T-cell (primary cell): ENCODE measurements at regions of chr4 and their contacts with region 1.

Region 1: DNA sequence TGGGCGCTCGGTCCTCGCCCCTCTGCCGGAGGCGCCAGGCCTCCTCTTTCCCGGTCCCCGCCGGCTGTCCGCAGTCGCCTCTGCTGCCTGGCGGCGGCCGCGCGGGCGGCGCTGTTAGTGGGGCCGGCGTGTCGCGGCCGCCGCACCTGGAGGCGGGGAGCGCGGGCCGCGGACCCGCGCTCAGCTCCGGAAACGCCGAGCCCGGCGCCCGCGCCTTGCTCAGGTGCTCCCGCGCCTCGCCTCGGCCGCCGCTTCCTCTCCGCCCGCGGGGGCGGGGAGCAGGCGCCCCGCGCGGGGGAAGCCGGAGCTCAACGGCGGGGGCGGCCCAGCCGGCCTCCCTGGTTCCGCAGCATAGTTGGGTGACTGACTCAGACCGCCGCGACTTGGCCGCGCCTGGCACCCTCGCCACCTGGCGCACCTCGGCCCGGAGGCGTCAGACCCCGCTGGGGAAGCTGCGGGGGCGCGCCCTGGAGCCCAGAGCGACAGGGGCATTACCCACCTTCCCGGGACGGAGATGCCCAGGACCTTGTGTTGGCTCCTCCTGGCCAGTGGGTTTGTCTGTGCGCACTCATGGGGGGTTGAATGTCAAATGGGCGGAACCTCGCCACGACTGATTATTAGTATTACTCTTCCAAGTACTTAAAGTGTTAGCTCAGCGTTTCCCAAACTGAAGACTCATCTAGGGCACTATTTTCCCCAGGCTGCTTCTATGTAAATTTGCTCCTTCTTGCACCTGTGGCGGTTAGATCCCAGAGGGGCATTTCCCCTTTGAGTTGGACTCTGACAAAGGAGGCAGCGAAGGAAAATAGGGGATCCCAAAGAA is at the start of gene ARAP2:
- DNase-seq: peak; percentile 49 to 86 (median 68)
- ATAC-seq: peak; percentile 79 to 85 (median 84)
- H3K4me3 ChIP-seq: peak within 1 kb of the TSS; percentile 96 to 97
- H3K4me3 Mint-ChIP-seq: peak within 1 kb of the TSS; percentile 90 to 96 (median 90)
- H3K27ac ChIP-seq: peak within 1 kb of the TSS; percentile 97
- H3K27ac Mint-ChIP-seq: peak within 1 kb of the TSS; percentile 94 to 96
- H3K4me1 ChIP-seq: peaks cover 13 to 21% of the 10 kb centered on the region in 2 experiments
- H3K4me1 Mint-ChIP-seq: peaks cover 37 to 58% (median 49%) of the 10 kb centered on the region in 3 donors
- H3K27me3 ChIP-seq: no peaks in the 10 kb centered on the region
- H3K27me3 Mint-ChIP-seq: no peaks in the 10 kb centered on the region
- total RNA-seq, gene ARAP2: 41.2 to 94.3 (median 61.0) TPM

Region 2: GRCh38 chr4:36255577-36255976 is 11.1 kb after region 1 on chr4:
- CTCF ChIA-PET with region 1: interaction called, 3 to 12 read pairs
- POLR2A ChIA-PET with region 1: interaction called, 6 to 15 read pairs
- DNase-seq: peak; percentile 24 to 90 (median 68)
- ATAC-seq: peak; percentile 96 to 99 (median 98)
- H3K4me3 ChIP-seq: no peak overlapping the region
- H3K4me3 Mint-ChIP-seq: peak overlapping the region; percentile 61 to 65 (median 64)
- H3K27ac ChIP-seq: peak overlapping the region; percentile 75
- H3K27ac Mint-ChIP-seq: peak overlapping the region; percentile 88 to 96
- H3K4me1 ChIP-seq: peaks cover 19 to 30% of the 10 kb centered on the region in 2 experiments
- H3K4me1 Mint-ChIP-seq: peaks cover 38 to 50% (median 42%) of the 10 kb centered on the region in 3 donors
- H3K27me3 ChIP-seq: no peaks in the 10 kb centered on the region
- H3K27me3 Mint-ChIP-seq: no peaks in the 10 kb centered on the region

Region 3: DNA sequence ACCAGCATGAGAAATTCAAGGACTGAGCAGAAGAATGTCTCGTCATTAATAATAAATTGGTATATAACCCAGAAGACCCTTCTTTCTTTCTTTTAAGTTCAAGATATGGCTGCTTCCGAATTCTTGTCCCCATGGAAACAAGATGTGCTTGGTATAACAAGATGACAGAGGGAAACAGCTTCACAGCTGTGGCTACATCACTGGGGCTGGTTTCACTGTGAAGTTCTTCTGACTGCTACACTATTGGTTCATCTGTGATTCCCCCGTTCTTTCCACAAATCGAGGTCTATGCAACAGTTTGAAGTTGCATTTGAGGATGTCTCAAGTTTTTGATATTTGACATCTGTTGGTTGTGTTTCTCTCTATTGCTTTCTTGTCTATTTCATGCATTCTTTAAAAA is 24.6 kb after region 1 on chr4:
- CTCF ChIA-PET with region 1: interaction called, 3 to 6 read pairs
- POLR2A ChIA-PET with region 1: interaction called, 3 to 15 read pairs
- DNase-seq: peak in 31 of 35 experiments; percentile 9 to 86 (median 51)
- ATAC-seq: peak; percentile 52 to 97 (median 78)
- H3K4me3 ChIP-seq: no peak overlapping the region
- H3K4me3 Mint-ChIP-seq: peak overlapping the region in 1 of 3 donors; percentile 19
- H3K27ac ChIP-seq: peak overlapping the region; percentile 59
- H3K27ac Mint-ChIP-seq: peak overlapping the region; percentile 75 to 78
- H3K4me1 ChIP-seq: peaks cover 8 to 21% of the 10 kb centered on the region in 2 experiments
- H3K4me1 Mint-ChIP-seq: peaks cover 37 to 43% (median 43%) of the 10 kb centered on the region in 3 donors
- H3K27me3 ChIP-seq: no peaks in the 10 kb centered on the region
- H3K27me3 Mint-ChIP-seq: no peaks in the 10 kb centered on the region

Region 4: DNA sequence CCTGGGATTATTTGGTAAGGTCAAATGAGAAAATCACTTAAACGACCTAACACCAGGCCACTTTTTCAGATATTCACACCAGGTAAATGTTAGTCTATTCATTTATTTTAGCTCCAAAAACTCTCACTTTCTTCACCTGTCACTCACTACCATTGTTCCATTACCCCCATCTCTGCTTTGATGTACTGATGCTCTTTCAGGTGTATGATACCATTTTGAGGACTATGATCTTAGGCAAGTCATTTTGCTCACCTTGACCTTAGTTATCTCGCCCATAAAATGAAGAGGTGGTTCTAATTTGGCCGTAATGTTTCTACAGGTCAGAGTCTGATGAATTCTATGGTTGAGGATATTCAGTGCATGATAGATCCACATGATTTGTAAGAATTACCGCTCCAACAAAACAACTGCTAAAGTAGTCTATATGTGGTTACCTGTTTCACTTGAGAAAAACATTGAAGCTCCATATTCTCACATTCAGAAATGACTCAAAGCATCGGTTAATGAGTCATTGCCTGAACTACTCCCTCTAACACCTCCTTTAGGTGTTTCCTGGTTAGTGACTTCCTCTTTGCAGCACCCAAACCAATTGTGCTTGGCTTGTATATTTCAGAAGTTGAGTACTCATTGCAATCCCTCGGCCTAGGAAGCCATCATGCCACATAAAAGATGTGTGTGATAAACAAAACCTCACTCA is 41.5 kb after region 1 on chr4:
- CTCF ChIA-PET with region 1: interaction called in 1 of 2 experiments, 9 read pairs
- POLR2A ChIA-PET with region 1: interaction called, 3 to 10 read pairs
- DNase-seq: peak in 34 of 35 experiments; percentile 10 to 85 (median 42)
- ATAC-seq: peak; percentile 94 to 97 (median 96)
- H3K4me3 ChIP-seq: no peak overlapping the region
- H3K4me3 Mint-ChIP-seq: peak overlapping the region; percentile 28 to 58 (median 43)
- H3K27ac ChIP-seq: peak overlapping the region; percentile 87
- H3K27ac Mint-ChIP-seq: peak overlapping the region; percentile 94 to 96
- H3K4me1 ChIP-seq: peaks cover 2 to 4% of the 10 kb centered on the region in 2 experiments
- H3K4me1 Mint-ChIP-seq: peaks cover 12 to 58% (median 50%) of the 10 kb centered on the region in 3 donors
- H3K27me3 ChIP-seq: no peaks in the 10 kb centered on the region
- H3K27me3 Mint-ChIP-seq: no peaks in the 10 kb centered on the region

Region 5: DNA sequence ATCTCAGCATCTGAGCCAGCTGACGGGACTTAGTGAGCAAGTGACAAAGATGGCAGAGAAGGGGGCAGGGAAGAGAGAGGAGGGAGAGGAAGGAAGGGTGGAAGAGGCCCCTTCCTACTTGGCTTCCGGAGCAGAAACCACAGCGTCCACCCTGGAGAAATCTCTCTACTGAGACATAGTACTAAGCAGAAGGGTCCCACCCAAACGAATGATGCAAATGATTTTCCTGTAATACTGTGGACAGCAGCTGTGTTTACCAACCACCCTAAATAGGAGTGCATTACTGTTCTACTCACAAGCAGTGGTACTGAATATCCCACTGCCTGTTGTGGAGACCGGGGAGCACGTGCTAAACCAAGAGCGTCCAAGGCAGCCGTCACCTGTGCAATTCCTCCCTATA is 66.3 kb after region 1 on chr4:
- CTCF ChIA-PET with region 1: interaction called in 1 of 2 experiments, 11 read pairs
- POLR2A ChIA-PET with region 1: no interaction called
- DNase-seq: peak in 3 of 35 experiments; percentile 8 to 29 (median 23)
- ATAC-seq: peak in 3 of 4 experiments; percentile 24 to 70 (median 32)
- H3K4me3 ChIP-seq: no peak overlapping the region
- H3K4me3 Mint-ChIP-seq: peak overlapping the region in 1 of 3 donors; percentile 1
- H3K27ac ChIP-seq: no peak overlapping the region
- H3K27ac Mint-ChIP-seq: no peak overlapping the region
- H3K4me1 ChIP-seq: peaks cover 8 to 13% of the 10 kb centered on the region in 2 experiments
- H3K4me1 Mint-ChIP-seq: peaks cover 13 to 29% (median 27%) of the 10 kb centered on the region in 3 donors
- H3K27me3 ChIP-seq: no peaks in the 10 kb centered on the region
- H3K27me3 Mint-ChIP-seq: no peaks in the 10 kb centered on the region

Region 6: GRCh38 chr4:36502350-36502749 is 257.9 kb after region 1 on chr4:
- CTCF ChIA-PET with region 1: no interaction called
- POLR2A ChIA-PET with region 1: no interaction called
- DNase-seq: no peak
- ATAC-seq: no peak
- H3K4me3 ChIP-seq: no peak overlapping the region
- H3K4me3 Mint-ChIP-seq: no peak overlapping the region
- H3K27ac ChIP-seq: no peak overlapping the region
- H3K27ac Mint-ChIP-seq: no peak overlapping the region
- H3K4me1 ChIP-seq: no peaks in the 10 kb centered on the region
- H3K4me1 Mint-ChIP-seq: no peaks in the 10 kb centered on the region
- H3K27me3 ChIP-seq: no peaks in the 10 kb centered on the region
- H3K27me3 Mint-ChIP-seq: peaks cover 9 to 13% of the 10 kb centered on the region in 2 donors